Heart left ventricle (tissue), 16 donors: ENCODE measurements at regions of chr3 and their contacts with region 1.

Region 1: DNA sequence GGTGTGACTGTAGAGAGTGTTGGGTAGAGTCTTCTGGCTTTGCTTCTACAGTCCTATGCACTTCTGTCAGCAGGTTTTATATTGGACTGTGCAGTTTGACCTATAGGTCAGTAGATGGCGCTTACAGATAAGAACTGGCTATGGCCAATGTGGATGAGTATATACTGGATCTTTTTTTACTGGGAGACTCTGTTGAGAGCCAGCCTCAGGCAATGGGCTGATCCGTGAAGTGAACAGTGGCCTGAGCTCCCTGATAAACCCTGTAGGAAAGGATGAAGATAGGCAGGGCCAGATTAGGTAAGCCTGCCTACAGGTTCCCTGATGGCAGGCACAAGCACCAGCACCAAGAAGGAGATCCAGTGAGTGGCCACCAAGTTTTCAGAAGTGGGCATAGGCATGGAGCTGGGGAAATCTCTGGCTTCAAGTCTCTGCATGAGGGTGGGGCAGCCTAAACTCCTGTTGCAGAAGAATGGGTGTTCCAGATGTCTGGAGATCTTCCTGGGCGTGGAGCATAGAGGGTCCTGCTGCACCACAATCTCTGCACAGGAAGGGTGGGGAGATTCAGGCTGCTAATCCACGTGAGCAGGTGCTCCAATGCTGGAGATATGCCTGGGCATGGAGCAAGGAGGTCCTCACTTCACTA is 326.0 kb upstream of the SGO1 start:
- DNase-seq: no peak
- ATAC-seq: peak; percentile 47 to 91 (median 86)
- H3K4me3 ChIP-seq: no peak overlapping the region
- H3K27ac ChIP-seq: no peak overlapping the region
- H3K4me1 ChIP-seq: no peaks in the 10 kb centered on the region
- H3K27me3 ChIP-seq: no peaks in the 10 kb centered on the region
- CTCF ChIP-seq: peak; percentile 39 to 78 (median 64)
- POLR2A ChIP-seq: no peak

Region 2: GRCh38 chr3:20739814-20740213 is 227.8 kb after region 1 on chr3:
- intact Hi-C with region 1: loop called in 9 of 10 experiments (anchors 1 to 5 kb)
- DNase-seq: no peak
- ATAC-seq: no peak
- H3K4me3 ChIP-seq: no peak overlapping the region
- H3K27ac ChIP-seq: no peak overlapping the region
- H3K4me1 ChIP-seq: peaks cover 0 to 4% (median 0%) of the 10 kb centered on the region in 12 donors
- H3K27me3 ChIP-seq: no peaks in the 10 kb centered on the region
- CTCF ChIP-seq: peak in 10 of 12 donors; percentile 21 to 43 (median 31)
- POLR2A ChIP-seq: no peak

Region 3: GRCh38 chr3:21484057-21484827 is 972.3 kb after region 1 on chr3:
- intact Hi-C with region 1: loop called in 4 of 10 experiments (anchors 2 to 10 kb)
- DNase-seq: peak; percentile 39 to 57 (median 46)
- ATAC-seq: peak in 3 of 4 donors; percentile 33 to 44 (median 41)
- H3K4me3 ChIP-seq: no peak overlapping the region
- H3K27ac ChIP-seq: no peak overlapping the region
- H3K4me1 ChIP-seq: peaks cover 0 to 3% (median 0%) of the 10 kb centered on the region in 12 donors
- H3K27me3 ChIP-seq: no peaks in the 10 kb centered on the region
- CTCF ChIP-seq: peak; percentile 45 to 73 (median 58)
- POLR2A ChIP-seq: no peak

Region 4: GRCh38 chr3:21894459-21895340 is 1382.7 kb after region 1 on chr3:
- intact Hi-C with region 1: loop called in 6 of 10 experiments (anchors 2 to 10 kb)
- DNase-seq: peak in 1 of 5 donors; percentile 24
- ATAC-seq: peak; percentile 30 to 62 (median 50)
- H3K4me3 ChIP-seq: peak overlapping the region in 1 of 12 donors; percentile 15
- H3K27ac ChIP-seq: peak overlapping the region in 3 of 12 donors; percentile 16 to 39 (median 21)
- H3K4me1 ChIP-seq: peaks cover 0 to 24% (median 4%) of the 10 kb centered on the region in 12 donors
- H3K27me3 ChIP-seq: no peaks in the 10 kb centered on the region
- CTCF ChIP-seq: peak; percentile 45 to 84 (median 70)
- POLR2A ChIP-seq: no peak

Region 5: GRCh38 chr3:22117751-22118346 is 1605.9 kb after region 1 on chr3:
- intact Hi-C with region 1: loop called in 1 of 10 experiments (anchors 5 kb)
- DNase-seq: no peak
- ATAC-seq: no peak
- H3K4me3 ChIP-seq: no peak overlapping the region
- H3K27ac ChIP-seq: no peak overlapping the region
- H3K4me1 ChIP-seq: no peaks in the 10 kb centered on the region
- H3K27me3 ChIP-seq: no peaks in the 10 kb centered on the region
- CTCF ChIP-seq: peak; percentile 52 to 80 (median 66)
- POLR2A ChIP-seq: no peak